ENCODE measurements at regions of chr3 and their contacts with region 1.

Region 1: DNA sequence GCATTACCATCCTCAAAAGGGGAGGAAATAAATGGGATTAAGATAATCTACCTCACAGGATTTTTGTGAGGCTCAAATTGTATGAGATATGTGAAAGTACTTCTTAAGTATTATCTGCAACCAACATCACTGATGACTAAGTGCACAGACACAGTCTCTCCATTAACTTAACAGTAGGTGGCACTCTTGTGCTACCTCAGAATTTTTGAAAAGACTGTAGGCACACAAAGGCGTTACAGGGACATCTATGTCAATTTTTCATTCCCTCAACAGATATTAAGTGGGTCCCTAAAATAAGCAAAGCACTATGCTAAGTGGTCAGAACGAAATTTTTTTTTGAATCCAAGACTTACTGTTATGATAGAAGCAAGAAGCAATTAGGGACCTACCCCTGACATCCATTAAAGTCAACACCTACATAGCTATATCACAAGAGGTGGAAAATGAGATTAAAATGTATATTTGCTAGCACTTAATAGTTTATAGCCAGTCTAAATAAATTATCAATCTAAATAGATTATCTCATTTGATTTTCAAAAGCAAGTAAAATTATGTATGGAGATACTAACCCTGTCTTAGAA is 52.9 kb downstream of the RYK start:
- DNase-seq: no peak
- H3K4me3 ChIP-seq: no peak overlapping the region
- H3K27ac ChIP-seq: no peak overlapping the region
- H3K4me1 ChIP-seq: no peaks in the 10 kb centered on the region
- H3K27me3 ChIP-seq: no peaks in the 10 kb centered on the region
- CTCF ChIP-seq: peak; percentile 42 to 73 (median 70)
- EP300 ChIP-seq: no peak
- POLR2A ChIP-seq: no peak

Region 2: GRCh38 chr3:133812872-133813271 is 384.9 kb before region 1 on chr3:
- intact Hi-C with region 1: loop called in 1 of 4 experiments (anchors 10 kb)
- DNase-seq: no peak
- H3K4me3 ChIP-seq: no peak overlapping the region
- H3K27ac ChIP-seq: no peak overlapping the region
- H3K4me1 ChIP-seq: no peaks in the 10 kb centered on the region
- H3K27me3 ChIP-seq: no peaks in the 10 kb centered on the region
- CTCF ChIP-seq: no peak
- EP300 ChIP-seq: no peak
- POLR2A ChIP-seq: no peak

Region 3: DNA sequence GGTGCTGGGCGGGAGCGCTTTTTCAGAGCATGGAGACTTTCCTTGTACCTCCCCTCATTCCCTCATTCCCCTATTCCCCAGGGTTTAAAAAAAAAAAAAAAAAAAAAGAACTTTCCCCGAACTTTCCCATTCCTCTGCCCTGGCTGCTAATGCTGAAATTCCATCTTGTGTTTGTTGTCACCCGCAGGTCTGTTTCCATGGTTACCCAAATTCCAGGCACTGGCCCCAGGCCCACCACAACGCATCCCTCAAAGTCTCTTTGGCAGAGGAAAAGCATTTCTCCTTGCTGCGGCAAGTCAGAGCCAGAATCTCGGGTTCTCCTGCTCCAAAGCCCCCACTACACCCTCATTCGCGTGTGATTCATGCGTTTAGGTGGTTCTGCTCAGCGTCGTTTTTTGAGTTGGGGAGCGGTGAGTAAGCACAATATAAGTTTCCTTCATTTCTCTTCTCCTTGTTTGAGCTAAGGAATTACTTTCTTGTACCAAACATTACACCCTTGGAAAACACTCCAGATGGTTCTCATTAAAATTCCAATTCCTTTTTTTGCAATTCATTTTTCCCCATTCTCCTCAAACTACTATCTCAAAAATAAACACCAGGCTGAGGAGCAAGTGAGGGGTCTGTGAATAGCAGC is 266.4 kb after region 1 on chr3:
- intact Hi-C with region 1: loop called in 1 of 4 experiments (anchors 10 kb)
- DNase-seq: peak; percentile 87 to 94 (median 91)
- H3K4me3 ChIP-seq: no peak overlapping the region
- H3K27ac ChIP-seq: peak overlapping the region in 1 of 2 donors; percentile 46
- H3K4me1 ChIP-seq: peaks cover 18% of the 10 kb centered on the region
- H3K27me3 ChIP-seq: no peaks in the 10 kb centered on the region
- CTCF ChIP-seq: no peak
- EP300 ChIP-seq: peak; percentile 40
- POLR2A ChIP-seq: no peak

Region 4: DNA sequence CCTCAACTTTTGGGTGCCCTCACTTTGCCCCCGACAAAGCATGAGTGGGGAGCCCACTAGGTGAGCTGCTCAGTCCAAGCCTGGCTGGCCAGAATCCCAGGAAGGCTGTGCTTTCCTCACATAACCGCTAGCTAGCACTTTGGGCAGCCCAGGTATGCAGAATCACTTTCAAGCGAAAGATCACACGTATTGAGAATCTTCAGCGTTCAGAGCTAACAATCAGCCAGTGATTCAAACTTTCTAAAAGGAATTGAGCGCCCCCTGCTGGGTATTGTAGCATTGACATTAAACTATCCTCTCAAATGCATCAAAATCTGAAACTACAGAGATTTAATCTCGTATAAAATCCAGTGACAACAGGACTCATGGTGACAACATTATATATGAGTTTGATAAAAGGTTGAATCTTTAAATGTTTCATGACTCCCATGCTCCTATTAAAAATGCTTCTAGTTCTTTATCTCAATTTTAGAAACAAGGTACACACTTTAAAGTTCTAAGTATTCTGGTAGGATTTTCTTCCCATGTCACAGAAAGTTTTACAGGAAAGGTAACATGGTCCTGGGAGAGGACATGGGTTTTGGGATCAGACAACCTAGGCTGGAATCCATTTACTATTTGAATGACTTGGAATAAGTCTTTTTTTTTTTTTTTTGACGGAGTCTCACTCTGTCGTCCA is 276.2 kb after region 1 on chr3:
- intact Hi-C with region 1: loop called in 2 of 4 experiments (anchors 10 kb)
- DNase-seq: peak; percentile 65 to 87 (median 73)
- H3K4me3 ChIP-seq: no peak overlapping the region
- H3K27ac ChIP-seq: no peak overlapping the region
- H3K4me1 ChIP-seq: no peaks in the 10 kb centered on the region
- H3K27me3 ChIP-seq: no peaks in the 10 kb centered on the region
- CTCF ChIP-seq: peak; percentile 60 to 89 (median 87)
- EP300 ChIP-seq: no peak
- POLR2A ChIP-seq: no peak

Region 5: DNA sequence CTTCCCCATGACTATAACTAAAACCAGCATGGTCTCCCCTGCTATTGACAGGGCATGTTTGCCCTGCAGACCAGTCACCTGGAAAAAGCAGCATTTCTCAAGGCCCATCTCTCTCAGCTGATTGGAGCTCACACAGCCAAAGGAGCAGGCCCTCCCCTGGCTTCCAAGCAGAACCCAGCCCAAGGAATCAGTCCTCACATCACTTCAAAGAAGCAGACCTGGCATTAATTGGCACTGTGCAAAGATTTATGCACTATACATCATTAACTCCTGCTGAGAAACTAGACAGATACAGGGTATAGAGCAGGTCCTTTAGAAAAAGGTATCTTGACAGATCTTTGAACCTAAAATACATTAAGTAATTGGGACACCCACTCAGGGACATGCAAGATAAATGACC is 1444.0 kb after region 1 on chr3:
- intact Hi-C with region 1: no loop called
- DNase-seq: no peak
- H3K4me3 ChIP-seq: no peak overlapping the region
- H3K27ac ChIP-seq: no peak overlapping the region
- H3K4me1 ChIP-seq: no peaks in the 10 kb centered on the region
- H3K27me3 ChIP-seq: no peaks in the 10 kb centered on the region
- CTCF ChIP-seq: no peak
- EP300 ChIP-seq: no peak
- POLR2A ChIP-seq: no peak